ENCODE measurements at regions of chr11 and their contacts with region 1.

Region 1: DNA sequence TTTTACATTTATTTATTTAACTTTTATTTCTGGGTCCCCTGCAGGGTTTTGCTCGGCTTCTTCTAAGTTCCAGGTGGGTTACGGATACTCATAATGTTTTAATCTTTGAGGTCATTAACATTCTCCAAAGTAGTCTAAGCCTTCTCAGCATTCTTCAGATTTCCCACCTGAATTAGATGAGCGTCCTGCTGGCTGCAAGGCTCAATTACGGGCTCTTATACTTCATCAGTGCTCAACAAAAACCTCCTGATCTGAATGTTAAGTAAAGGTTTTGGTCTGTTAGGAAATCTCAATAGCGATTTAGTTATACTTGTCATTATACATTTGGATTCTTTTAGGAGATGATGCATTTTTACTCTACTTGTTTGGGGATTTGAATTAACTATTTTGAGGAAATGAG is 27.3 kb upstream of the NFRKB start:
- DNase-seq: no peak
- ATAC-seq: no peak

Region 2: GRCh38 chr11:129750349-129751292 is 172.1 kb before region 1 on chr11:
- intact Hi-C with region 1: no loop called
- DNase-seq: peak; percentile 83
- ATAC-seq: peak; percentile 96

Region 3: GRCh38 chr11:129976328-129976727 is 53.7 kb after region 1 on chr11:
- intact Hi-C with region 1: no loop called
- DNase-seq: no peak
- ATAC-seq: no peak

Region 4: DNA sequence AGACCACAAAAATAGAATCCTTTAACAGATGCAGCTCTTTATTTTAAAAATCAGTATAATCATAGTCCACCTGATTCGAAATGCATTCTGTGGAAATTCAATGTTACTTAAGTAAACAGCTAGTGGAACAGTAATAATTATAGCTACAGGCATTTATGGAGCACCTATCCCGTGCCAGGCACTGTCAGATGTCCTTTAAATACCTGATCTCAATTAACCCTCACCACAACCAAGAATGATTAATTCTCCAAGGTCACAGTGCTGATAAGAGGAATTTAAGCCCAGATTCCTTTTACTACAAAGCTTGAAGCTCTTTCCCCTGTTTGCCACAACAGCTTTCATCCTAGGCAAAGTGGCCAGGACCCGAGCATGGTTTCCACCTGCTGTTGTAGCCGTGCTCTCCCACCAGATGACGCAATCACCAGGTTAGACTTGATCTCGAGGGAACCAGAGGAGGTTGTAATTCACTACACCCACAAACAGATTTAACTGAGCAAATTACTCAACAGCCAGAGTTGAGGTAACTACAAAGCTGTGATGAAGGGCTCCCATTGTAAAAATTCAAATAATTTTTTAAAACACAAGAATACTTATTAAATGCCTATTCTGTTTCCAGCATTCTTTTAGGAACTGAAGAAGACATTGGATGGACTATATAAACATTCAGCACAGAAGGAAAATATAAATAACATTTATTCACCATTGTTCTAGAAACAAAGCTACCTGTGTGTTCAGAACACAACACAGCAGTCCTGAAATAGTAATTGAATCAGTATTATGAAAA is 69.7 kb after region 1 on chr11:
- intact Hi-C with region 1: no loop called
- DNase-seq: no peak
- ATAC-seq: peak; percentile 72

Region 5: GRCh38 chr11:130131961-130132850 is 209.5 kb after region 1 on chr11:
- intact Hi-C with region 1: loop called (anchors 5 kb)
- DNase-seq: no peak
- ATAC-seq: peak; percentile 81

Region 6: GRCh38 chr11:130478204-130478701 is 555.6 kb after region 1 on chr11:
- intact Hi-C with region 1: no loop called
- DNase-seq: peak; percentile 86
- ATAC-seq: peak; percentile 69